ENCODE measurements at regions of chrX and their contacts with region 1.

Region 1: GRCh38 chrX:2176733-2177132 is 324.0 kb downstream of the DHRSX start:
- DNase-seq: no peak
- ATAC-seq: no peak
- H3K4me3 ChIP-seq: no peak overlapping the region
- H3K27ac ChIP-seq: no peak overlapping the region
- H3K4me1 ChIP-seq: peaks cover 23% of the 10 kb centered on the region
- H3K27me3 ChIP-seq: no peaks in the 10 kb centered on the region
- CTCF ChIP-seq: no peak
- EP300 ChIP-seq: no peak
- POLR2A ChIP-seq: no peak
- RAD21 ChIP-seq: no peak

Region 2: DNA sequence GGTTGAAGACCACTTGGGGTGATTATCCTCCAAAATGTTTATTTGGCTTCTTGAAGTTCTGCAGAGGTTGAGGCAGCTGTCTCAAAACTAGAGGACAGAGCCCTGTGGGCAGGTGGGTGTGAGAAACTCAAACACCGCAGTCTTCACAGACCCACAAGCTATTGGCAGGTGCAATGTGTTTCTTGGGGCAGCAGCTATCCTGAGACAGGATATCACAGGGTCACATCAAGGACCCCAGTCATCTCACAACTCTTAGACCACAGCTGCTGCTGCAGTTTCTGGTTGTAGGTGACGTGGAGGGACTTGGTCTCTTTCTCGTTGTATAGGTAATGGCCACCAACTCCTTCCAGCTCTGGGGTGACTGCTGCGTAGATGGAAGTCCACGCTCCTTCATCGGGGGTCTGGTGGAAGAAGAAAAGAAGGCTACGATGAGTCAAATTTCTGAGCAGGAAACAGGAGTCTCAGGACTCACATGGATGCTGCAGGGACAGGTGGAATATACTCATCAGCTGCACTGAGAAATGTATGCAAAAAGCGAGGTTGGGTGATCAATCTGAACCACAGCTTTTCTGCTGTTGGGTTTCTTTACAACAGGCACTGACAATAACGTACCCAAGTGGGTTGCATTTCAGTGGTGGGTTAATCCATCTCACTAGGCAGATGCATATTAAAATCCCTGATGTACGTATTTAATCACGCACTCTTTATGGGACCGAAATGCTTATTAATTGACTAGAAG is 44.3 kb after region 1 on chrX:
- CTCF ChIA-PET with region 1: no interaction called
- POLR2A ChIA-PET with region 1: no interaction called
- RAD21 ChIA-PET with region 1: no interaction called
- SMC1A ChIA-PET with region 1: no interaction called
- in situ Hi-C with region 1: no loop called
- intact Hi-C with region 1: no loop called
- DNase-seq: no peak
- ATAC-seq: no peak; the same call in 2 of the 3 replicates
- H3K4me3 ChIP-seq: no peak overlapping the region
- H3K27ac ChIP-seq: no peak overlapping the region
- H3K4me1 ChIP-seq: no peaks in the 10 kb centered on the region
- H3K27me3 ChIP-seq: no peaks in the 10 kb centered on the region
- CTCF ChIP-seq: no peak
- EP300 ChIP-seq: no peak
- POLR2A ChIP-seq: no peak
- RAD21 ChIP-seq: no peak

Region 3: GRCh38 chrX:2231570-2232192 is 54.9 kb after region 1 on chrX:
- CTCF ChIA-PET with region 1: no interaction called
- POLR2A ChIA-PET with region 1: no interaction called
- RAD21 ChIA-PET with region 1: no interaction called
- SMC1A ChIA-PET with region 1: no interaction called
- in situ Hi-C with region 1: no loop called
- intact Hi-C with region 1: loop called (anchors 2 kb)
- DNase-seq: no peak
- ATAC-seq: no peak
- H3K4me3 ChIP-seq: no peak overlapping the region
- H3K27ac ChIP-seq: no peak overlapping the region
- H3K4me1 ChIP-seq: peaks cover 15% of the 10 kb centered on the region
- H3K27me3 ChIP-seq: no peaks in the 10 kb centered on the region
- CTCF ChIP-seq: no peak
- EP300 ChIP-seq: no peak
- POLR2A ChIP-seq: no peak
- RAD21 ChIP-seq: no peak

Region 4: DNA sequence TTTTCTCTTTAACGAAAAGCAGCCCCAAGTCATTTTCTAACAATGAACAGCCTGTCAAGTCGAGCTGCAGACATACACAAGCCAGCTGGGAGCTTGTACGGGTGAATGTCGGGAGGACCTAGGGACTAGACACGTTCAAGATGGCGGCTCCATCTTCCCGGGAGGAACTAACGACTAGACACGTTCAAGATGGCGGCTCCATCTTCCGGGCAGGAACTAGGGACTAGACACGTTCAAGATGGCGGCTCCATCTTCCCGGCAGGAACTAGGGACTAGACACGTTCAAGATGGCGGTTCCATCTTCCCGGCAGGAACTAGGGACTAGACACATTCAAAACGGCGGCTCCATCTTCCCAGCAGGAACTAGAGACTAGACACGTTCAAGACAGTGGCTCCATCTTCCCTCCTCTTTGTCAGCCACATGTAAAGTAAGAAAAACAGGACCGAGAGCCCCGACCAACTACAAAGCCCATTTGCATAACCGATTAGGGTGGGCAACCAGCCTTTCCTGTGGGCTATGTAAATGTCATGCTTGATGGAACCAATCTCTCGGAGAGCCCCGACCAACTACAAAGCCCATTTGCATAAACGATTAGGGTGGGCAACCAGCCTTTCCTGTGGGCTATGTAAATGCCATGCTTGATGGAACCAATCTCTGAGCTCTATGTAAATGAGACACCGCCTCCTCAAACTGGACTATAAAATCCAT is 148.5 kb after region 1 on chrX:
- CTCF ChIA-PET with region 1: no interaction called
- POLR2A ChIA-PET with region 1: no interaction called
- RAD21 ChIA-PET with region 1: no interaction called
- SMC1A ChIA-PET with region 1: no interaction called
- in situ Hi-C with region 1: no loop called
- intact Hi-C with region 1: loop called (anchors 5 kb)
- DNase-seq: peak; percentile 63
- ATAC-seq: peak; percentile 82
- H3K4me3 ChIP-seq: peak overlapping the region; percentile 71; the same call in 1 of the 2 replicates
- H3K27ac ChIP-seq: peak overlapping the region; percentile 65
- H3K4me1 ChIP-seq: no peaks in the 10 kb centered on the region
- H3K27me3 ChIP-seq: no peaks in the 10 kb centered on the region
- CTCF ChIP-seq: no peak
- EP300 ChIP-seq: no peak
- POLR2A ChIP-seq: peak; percentile 67
- RAD21 ChIP-seq: no peak